ENCODE measurements at regions of chr4 and their contacts with region 1.

Region 1: DNA sequence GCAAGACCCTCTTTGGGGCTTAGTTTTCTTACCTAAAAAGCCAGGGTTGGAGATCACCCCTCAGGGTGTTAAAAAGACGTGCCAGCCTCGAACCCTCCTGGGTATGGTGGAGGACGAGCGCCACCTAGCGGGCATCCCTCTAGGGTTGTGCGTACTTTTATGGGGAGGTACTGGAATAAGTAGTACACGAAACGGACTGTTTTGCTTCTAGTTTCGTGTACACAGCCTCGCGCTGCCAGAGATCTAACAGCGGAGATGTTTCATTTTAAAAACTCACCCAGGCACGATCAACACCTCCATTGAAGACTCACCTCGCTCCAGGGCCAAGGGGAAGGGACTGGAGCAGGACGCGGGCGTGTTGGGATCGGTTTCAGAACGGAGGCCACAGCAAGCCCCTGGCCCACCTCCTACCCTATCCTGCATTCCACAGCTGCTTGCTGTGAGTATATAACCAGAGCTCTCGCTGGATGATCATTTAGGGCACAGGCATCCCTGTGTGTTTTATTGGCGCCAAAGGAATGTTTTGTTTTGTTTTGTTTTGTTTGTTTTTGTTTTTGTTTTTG is 4.8 kb upstream of the NKX3-2 start:
- DNase-seq: peak; percentile 89
- ATAC-seq: peak; percentile 74

Region 2: GRCh38 chr4:12734586-12734985 is 814.5 kb before region 1 on chr4:
- intact Hi-C with region 1: loop called (anchors 5 kb)
- DNase-seq: no peak
- ATAC-seq: no peak

Region 3: GRCh38 chr4:12852338-12853307 is 696.4 kb before region 1 on chr4:
- intact Hi-C with region 1: loop called (anchors 1 kb)
- DNase-seq: no peak
- ATAC-seq: peak; percentile 75

Region 4: DNA sequence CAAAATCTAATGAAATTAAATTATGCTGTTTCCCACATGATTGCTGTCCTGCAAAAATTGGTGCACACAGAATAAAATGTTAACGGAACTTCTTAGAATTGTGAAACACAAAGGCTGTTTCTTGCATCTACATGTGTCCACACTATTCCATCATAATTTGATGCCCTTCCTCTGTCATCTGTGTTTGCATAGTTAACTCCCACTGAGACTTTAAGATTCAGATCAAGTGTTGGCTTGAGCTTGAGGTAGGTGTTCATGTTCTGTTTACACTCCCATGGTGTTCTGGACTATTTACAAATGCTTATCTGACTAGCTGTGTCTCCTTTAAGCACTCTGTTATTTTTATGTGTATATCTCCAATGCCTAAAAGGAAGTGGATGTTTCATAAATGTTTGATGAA is 687.7 kb before region 1 on chr4:
- intact Hi-C with region 1: loop called (anchors 2 kb)
- DNase-seq: no peak
- ATAC-seq: no peak

Measured in Right ventricle myocardium inferior (tissue), 1 donor.